T-cell (primary cell): ENCODE measurements at regions of chr12 and their contacts with region 1.

Region 1: DNA sequence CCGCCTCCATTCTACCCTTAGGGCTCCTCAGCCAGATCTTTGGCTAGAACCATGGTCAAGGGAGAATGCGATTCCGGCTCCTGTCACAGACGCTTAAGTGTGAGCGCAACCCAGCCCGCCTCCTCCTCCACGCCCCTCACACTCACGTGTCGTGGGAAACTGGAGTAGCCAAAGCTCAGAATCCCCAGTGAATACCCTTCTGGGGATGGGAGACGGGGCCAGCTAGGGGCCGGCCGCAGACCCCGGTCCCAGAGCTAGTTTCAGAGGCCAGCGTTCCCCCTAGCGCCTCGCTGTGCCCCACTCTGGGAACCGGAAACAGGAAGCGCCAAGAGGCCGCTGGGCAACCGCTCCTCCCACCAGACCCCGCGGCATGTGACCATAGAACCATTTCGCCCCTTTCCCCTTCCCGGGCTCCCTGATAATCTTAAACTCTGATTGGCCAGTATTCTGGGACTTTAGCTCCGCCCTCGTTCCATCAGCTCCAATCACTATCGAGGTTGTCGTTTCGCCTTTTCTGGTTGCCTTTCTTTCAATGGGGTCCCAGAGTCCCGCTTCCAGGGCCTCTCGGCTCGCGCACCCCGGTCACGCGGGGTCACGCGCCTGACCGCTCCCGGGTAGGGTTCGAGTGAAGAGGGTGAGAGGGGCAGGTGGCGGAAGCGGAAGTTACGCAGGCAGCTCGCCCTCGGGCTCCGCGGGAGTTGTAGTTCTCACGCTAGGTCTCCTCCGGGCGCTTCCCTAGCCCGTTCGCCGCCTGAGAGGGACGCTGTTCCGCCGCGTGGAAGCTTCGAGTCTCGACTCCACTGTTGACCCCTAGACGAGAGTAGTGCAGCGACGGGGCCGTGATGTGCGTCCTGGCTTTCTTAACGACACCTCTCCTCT is at the start of gene M6PR:
- DNase-seq: peak; percentile 71 to 93 (median 85)
- ATAC-seq: peak; percentile 81 to 85 (median 82)
- H3K4me3 ChIP-seq: peak within 1 kb of the TSS; percentile 84 to 95
- H3K4me3 Mint-ChIP-seq: peak within 1 kb of the TSS; percentile 90 to 95 (median 91)
- H3K27ac ChIP-seq: peak within 1 kb of the TSS; percentile 97
- H3K27ac Mint-ChIP-seq: peak within 1 kb of the TSS; percentile 89 to 97
- H3K4me1 ChIP-seq: peaks cover 41 to 49% of the 10 kb centered on the region in 2 experiments
- H3K4me1 Mint-ChIP-seq: peaks cover 66 to 83% (median 71%) of the 10 kb centered on the region in 3 donors
- H3K27me3 ChIP-seq: no peaks in the 10 kb centered on the region
- H3K27me3 Mint-ChIP-seq: no peaks in the 10 kb centered on the region
- total RNA-seq, gene M6PR: 162 to 189 (median 187) TPM

Region 2: GRCh38 chr12:8860165-8860961 is 89.2 kb before region 1 on chr12:
- CTCF ChIA-PET with region 1: no interaction called
- POLR2A ChIA-PET with region 1: no interaction called
- DNase-seq: peak in 28 of 35 experiments; percentile 0 to 61 (median 14)
- ATAC-seq: peak in 2 of 4 experiments; percentile 43 to 49
- H3K4me3 ChIP-seq: no peak overlapping the region
- H3K4me3 Mint-ChIP-seq: no peak overlapping the region
- H3K27ac ChIP-seq: no peak overlapping the region
- H3K27ac Mint-ChIP-seq: no peak overlapping the region
- H3K4me1 ChIP-seq: no peaks in the 10 kb centered on the region
- H3K4me1 Mint-ChIP-seq: no peaks in the 10 kb centered on the region
- H3K27me3 ChIP-seq: no peaks in the 10 kb centered on the region
- H3K27me3 Mint-ChIP-seq: peaks cover 0 to 3% of the 10 kb centered on the region in 2 donors

Region 3: GRCh38 chr12:8914716-8915526 is 34.7 kb before region 1 on chr12:
- CTCF ChIA-PET with region 1: interaction called, 5 to 22 read pairs
- POLR2A ChIA-PET with region 1: no interaction called
- DNase-seq: peak; percentile 13 to 72 (median 43)
- ATAC-seq: peak; percentile 82 to 88 (median 87)
- H3K4me3 ChIP-seq: peak overlapping the region; percentile 55 to 94
- H3K4me3 Mint-ChIP-seq: no peak overlapping the region
- H3K27ac ChIP-seq: peak overlapping the region; percentile 15
- H3K27ac Mint-ChIP-seq: no peak overlapping the region
- H3K4me1 ChIP-seq: peaks cover 13 to 21% of the 10 kb centered on the region in 2 experiments
- H3K4me1 Mint-ChIP-seq: peaks cover 15 to 17% (median 17%) of the 10 kb centered on the region in 3 donors
- H3K27me3 ChIP-seq: no peaks in the 10 kb centered on the region
- H3K27me3 Mint-ChIP-seq: no peaks in the 10 kb centered on the region

Region 4: GRCh38 chr12:8969861-8970412 is 20.4 kb after region 1 on chr12:
- CTCF ChIA-PET with region 1: no interaction called
- POLR2A ChIA-PET with region 1: no interaction called
- DNase-seq: no peak
- ATAC-seq: no peak
- H3K4me3 ChIP-seq: no peak overlapping the region
- H3K4me3 Mint-ChIP-seq: no peak overlapping the region
- H3K27ac ChIP-seq: peak overlapping the region; percentile 9
- H3K27ac Mint-ChIP-seq: peak overlapping the region; percentile 50 to 61
- H3K4me1 ChIP-seq: peaks cover 0 to 5% of the 10 kb centered on the region in 2 experiments
- H3K4me1 Mint-ChIP-seq: peaks cover 10 to 16% (median 16%) of the 10 kb centered on the region in 3 donors
- H3K27me3 ChIP-seq: no peaks in the 10 kb centered on the region
- H3K27me3 Mint-ChIP-seq: no peaks in the 10 kb centered on the region

Region 5: GRCh38 chr12:9027161-9028059 is 77.8 kb after region 1 on chr12:
- CTCF ChIA-PET with region 1: interaction called, 3 to 19 read pairs
- POLR2A ChIA-PET with region 1: interaction called in 1 of 2 experiments, 3 read pairs
- DNase-seq: peak in 3 of 35 experiments; percentile 3 to 30 (median 23)
- ATAC-seq: no peak
- H3K4me3 ChIP-seq: no peak overlapping the region
- H3K4me3 Mint-ChIP-seq: peak overlapping the region; percentile 2 to 61 (median 17)
- H3K27ac ChIP-seq: peak overlapping the region; percentile 95
- H3K27ac Mint-ChIP-seq: peak overlapping the region; percentile 90 to 96
- H3K4me1 ChIP-seq: peaks cover 51 to 86% of the 10 kb centered on the region in 2 experiments
- H3K4me1 Mint-ChIP-seq: peaks cover 32 to 55% (median 54%) of the 10 kb centered on the region in 3 donors
- H3K27me3 ChIP-seq: no peaks in the 10 kb centered on the region
- H3K27me3 Mint-ChIP-seq: no peaks in the 10 kb centered on the region

Region 6: DNA sequence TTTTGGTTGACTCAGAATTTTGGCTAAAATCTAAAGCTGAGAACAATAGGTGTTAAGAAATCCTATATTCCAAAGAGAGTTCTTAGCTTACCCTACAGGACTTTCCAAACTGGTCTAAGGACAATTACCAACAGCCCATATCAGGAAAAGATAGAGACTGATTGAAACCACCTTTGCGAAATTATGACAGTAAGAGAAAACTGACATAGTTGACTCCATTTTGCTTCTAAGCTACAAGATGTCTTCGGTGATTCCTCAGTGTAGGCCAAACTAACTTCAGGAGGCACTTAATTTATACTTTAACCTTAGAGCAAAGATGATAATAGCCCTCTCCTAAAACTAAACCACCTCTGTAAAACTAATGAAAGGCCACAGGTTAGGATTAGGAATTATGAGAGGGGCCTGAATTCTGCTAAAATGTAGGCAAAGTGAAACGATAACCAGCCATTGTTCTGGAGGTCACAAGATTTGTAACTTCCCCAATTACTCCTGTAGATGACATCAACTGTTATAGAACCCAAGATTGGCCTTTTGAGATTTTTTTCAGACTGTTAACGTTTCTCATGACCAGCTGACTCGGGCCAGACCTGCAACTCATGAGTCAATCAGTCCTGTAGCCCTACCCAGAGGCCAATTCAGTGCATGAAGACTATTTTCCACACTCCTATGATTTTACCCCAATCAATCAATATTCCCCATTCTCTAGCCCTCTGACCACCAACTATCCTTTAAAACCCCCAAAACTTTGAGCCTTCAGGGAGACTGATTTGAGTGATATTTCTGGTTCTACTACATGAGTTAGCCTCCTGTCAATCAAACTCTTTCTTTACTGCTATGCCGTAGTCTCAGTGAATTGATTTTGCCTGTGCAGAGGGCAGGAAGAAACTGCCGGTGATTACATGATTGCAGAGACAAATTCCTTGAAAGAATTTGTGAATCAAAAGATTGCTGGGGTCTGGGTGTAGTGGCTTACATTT is 82.9 kb after region 1 on chr12:
- CTCF ChIA-PET with region 1: interaction called, 8 to 107 read pairs
- POLR2A ChIA-PET with region 1: interaction called in 1 of 2 experiments, 3 read pairs
- DNase-seq: no peak
- ATAC-seq: no peak
- H3K4me3 ChIP-seq: no peak overlapping the region
- H3K4me3 Mint-ChIP-seq: no peak overlapping the region
- H3K27ac ChIP-seq: peak overlapping the region; percentile 17
- H3K27ac Mint-ChIP-seq: peak overlapping the region; percentile 70 to 91
- H3K4me1 ChIP-seq: peaks cover 23 to 67% of the 10 kb centered on the region in 2 experiments
- H3K4me1 Mint-ChIP-seq: peaks cover 52 to 72% (median 69%) of the 10 kb centered on the region in 3 donors
- H3K27me3 ChIP-seq: no peaks in the 10 kb centered on the region
- H3K27me3 Mint-ChIP-seq: no peaks in the 10 kb centered on the region

Region 7: GRCh38 chr12:9039397-9039977 is 89.9 kb after region 1 on chr12:
- CTCF ChIA-PET with region 1: interaction called, 46 to 107 read pairs
- POLR2A ChIA-PET with region 1: interaction called in 1 of 2 experiments, 8 read pairs
- DNase-seq: peak in 7 of 35 experiments; percentile 11 to 75 (median 24)
- ATAC-seq: peak; percentile 70 to 86 (median 80)
- H3K4me3 ChIP-seq: no peak overlapping the region
- H3K4me3 Mint-ChIP-seq: peak overlapping the region in 1 of 3 donors; percentile 16
- H3K27ac ChIP-seq: peak overlapping the region; percentile 40
- H3K27ac Mint-ChIP-seq: peak overlapping the region; percentile 80 to 92
- H3K4me1 ChIP-seq: peaks cover 34 to 35% of the 10 kb centered on the region in 2 experiments
- H3K4me1 Mint-ChIP-seq: peaks cover 41 to 73% (median 70%) of the 10 kb centered on the region in 3 donors
- H3K27me3 ChIP-seq: no peaks in the 10 kb centered on the region
- H3K27me3 Mint-ChIP-seq: no peaks in the 10 kb centered on the region